CD4-positive, alpha-beta memory T cell (primary cell): ENCODE measurements at regions of chr12 and their contacts with region 1.

Region 1: GRCh38 chr12:93419388-93420034 is 22.2 kb downstream of the UBE2N start:
- DNase-seq: peak in 4 of 5 donors; percentile 41 to 55 (median 48)
- H3K4me3 ChIP-seq: no peak overlapping the region
- H3K4me3 Mint-ChIP-seq: peak overlapping the region in 3 of 8 donors; percentile 8 to 21 (median 19)
- H3K27ac ChIP-seq: no peak overlapping the region
- H3K27ac Mint-ChIP-seq: peak overlapping the region; percentile 39 to 89 (median 76)
- H3K4me1 ChIP-seq: peaks cover 80% of the 10 kb centered on the region
- H3K4me1 Mint-ChIP-seq: peaks cover 62 to 93% (median 80%) of the 10 kb centered on the region in 4 donors
- H3K27me3 ChIP-seq: no peaks in the 10 kb centered on the region
- H3K27me3 Mint-ChIP-seq: no peaks in the 10 kb centered on the region

Region 2: DNA sequence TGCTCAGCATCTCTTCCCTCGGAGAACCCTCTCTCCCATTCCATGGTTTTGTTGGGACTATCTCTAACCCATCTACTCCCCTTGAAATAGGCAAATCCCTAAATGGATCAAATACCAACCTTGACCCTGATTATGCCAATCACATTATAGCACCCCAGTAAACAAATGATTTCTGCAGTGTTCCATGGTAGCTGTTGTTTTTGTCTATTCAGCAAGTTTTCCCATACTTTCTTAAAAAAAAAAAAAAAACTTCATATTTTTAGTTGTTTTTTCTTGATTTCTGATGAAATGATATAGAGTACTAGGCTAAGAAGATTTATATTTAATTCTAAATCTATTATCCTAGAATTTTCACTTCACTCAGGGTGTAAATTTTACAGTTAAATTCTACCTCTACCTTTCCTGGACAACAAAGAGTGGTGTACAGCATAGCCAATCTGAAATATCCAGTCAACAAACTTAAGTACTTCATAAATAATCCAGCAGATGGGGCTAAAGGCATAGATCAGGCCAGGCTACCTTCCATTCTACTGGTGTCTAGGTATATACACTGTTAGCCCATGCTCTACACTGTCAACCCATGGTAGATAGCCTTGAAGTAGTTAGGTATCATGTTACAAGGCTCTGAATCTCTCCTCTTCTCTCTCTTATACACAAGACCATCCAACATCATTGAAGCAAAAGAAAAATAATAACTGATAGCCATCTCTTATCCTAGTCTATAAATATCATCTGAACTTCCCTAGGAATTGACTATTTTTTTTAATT is 634.5 kb before region 1 on chr12:
- CTCF ChIA-PET with region 1: interaction called, 32 read pairs
- POLR2A ChIA-PET with region 1: no interaction called
- intact Hi-C with region 1: loop called (anchors 1 kb)
- DNase-seq: peak; percentile 54 to 73 (median 67)
- H3K4me3 ChIP-seq: no peak overlapping the region
- H3K4me3 Mint-ChIP-seq: no peak overlapping the region
- H3K27ac ChIP-seq: no peak overlapping the region
- H3K27ac Mint-ChIP-seq: peak overlapping the region in 1 of 7 donors; percentile 4
- H3K4me1 ChIP-seq: no peaks in the 10 kb centered on the region
- H3K4me1 Mint-ChIP-seq: peaks cover 0 to 4% (median 2%) of the 10 kb centered on the region in 4 donors
- H3K27me3 ChIP-seq: no peaks in the 10 kb centered on the region
- H3K27me3 Mint-ChIP-seq: no peaks in the 10 kb centered on the region

Region 3: GRCh38 chr12:93098077-93098476 is 321.4 kb before region 1 on chr12:
- CTCF ChIA-PET with region 1: interaction called, 47 read pairs
- POLR2A ChIA-PET with region 1: no interaction called
- intact Hi-C with region 1: loop called (anchors 1 kb)
- DNase-seq: peak; percentile 50 to 66 (median 54)
- H3K4me3 ChIP-seq: no peak overlapping the region
- H3K4me3 Mint-ChIP-seq: peak overlapping the region in 2 of 8 donors; percentile 12 to 46
- H3K27ac ChIP-seq: no peak overlapping the region
- H3K27ac Mint-ChIP-seq: peak overlapping the region in 1 of 7 donors; percentile 2
- H3K4me1 ChIP-seq: no peaks in the 10 kb centered on the region
- H3K4me1 Mint-ChIP-seq: peaks cover 6 to 10% (median 6%) of the 10 kb centered on the region in 4 donors
- H3K27me3 ChIP-seq: no peaks in the 10 kb centered on the region
- H3K27me3 Mint-ChIP-seq: no peaks in the 10 kb centered on the region

Region 4: DNA sequence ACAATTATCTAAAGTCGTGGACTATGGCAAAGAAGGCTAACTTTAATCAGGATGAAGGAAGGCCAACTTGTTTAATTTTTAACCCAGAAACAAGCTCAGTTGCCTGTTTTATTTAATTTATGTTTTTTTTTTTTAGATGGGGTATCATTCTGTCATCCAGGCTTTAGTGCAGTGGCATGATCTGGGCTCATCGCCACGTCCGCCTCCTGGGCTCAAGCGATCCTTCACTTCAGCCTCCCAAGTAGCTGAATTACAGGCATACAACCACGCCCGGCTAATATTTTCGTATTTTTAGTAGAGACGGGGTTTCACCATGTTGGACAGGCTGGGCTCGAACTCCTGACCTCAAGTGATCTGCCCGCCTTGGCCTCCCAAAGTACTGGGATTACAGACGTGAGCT is 22.1 kb before region 1 on chr12:
- CTCF ChIA-PET with region 1: interaction called, 33 read pairs
- POLR2A ChIA-PET with region 1: interaction called, 3 read pairs
- intact Hi-C with region 1: no loop called
- DNase-seq: no peak
- H3K4me3 ChIP-seq: no peak overlapping the region
- H3K4me3 Mint-ChIP-seq: no peak overlapping the region
- H3K27ac ChIP-seq: no peak overlapping the region
- H3K27ac Mint-ChIP-seq: no peak overlapping the region
- H3K4me1 ChIP-seq: no peaks in the 10 kb centered on the region
- H3K4me1 Mint-ChIP-seq: peaks cover 0 to 7% (median 0%) of the 10 kb centered on the region in 4 donors
- H3K27me3 ChIP-seq: no peaks in the 10 kb centered on the region
- H3K27me3 Mint-ChIP-seq: no peaks in the 10 kb centered on the region

Region 5: GRCh38 chr12:93441617-93442410 is 22.3 kb after region 1 on chr12 and contains the start of gene UBE2N:
- CTCF ChIA-PET with region 1: interaction called, 75 read pairs
- POLR2A ChIA-PET with region 1: interaction called, 10 read pairs
- intact Hi-C with region 1: loop called (anchors 2 kb)
- DNase-seq: peak; percentile 95 to 97 (median 97)
- H3K4me3 ChIP-seq: peak within 1 kb of the TSS; percentile 90 to 98
- H3K4me3 Mint-ChIP-seq: peak within 1 kb of the TSS; percentile 94 to 98 (median 97)
- H3K27ac ChIP-seq: peak within 1 kb of the TSS; percentile 95
- H3K27ac Mint-ChIP-seq: peak within 1 kb of the TSS; percentile 94 to 100 (median 99)
- H3K4me1 ChIP-seq: peaks cover 48% of the 10 kb centered on the region
- H3K4me1 Mint-ChIP-seq: peaks cover 36 to 51% (median 45%) of the 10 kb centered on the region in 4 donors
- H3K27me3 ChIP-seq: no peaks in the 10 kb centered on the region
- H3K27me3 Mint-ChIP-seq: no peaks in the 10 kb centered on the region
- total RNA-seq, gene UBE2N: 71.2 to 72.8 TPM

Region 6: GRCh38 chr12:94401326-94401725 is 981.8 kb after region 1 on chr12:
- CTCF ChIA-PET with region 1: no interaction called
- POLR2A ChIA-PET with region 1: no interaction called
- intact Hi-C with region 1: no loop called
- DNase-seq: no peak
- H3K4me3 ChIP-seq: no peak overlapping the region
- H3K4me3 Mint-ChIP-seq: no peak overlapping the region
- H3K27ac ChIP-seq: no peak overlapping the region
- H3K27ac Mint-ChIP-seq: no peak overlapping the region
- H3K4me1 ChIP-seq: peaks cover 5% of the 10 kb centered on the region
- H3K4me1 Mint-ChIP-seq: peaks cover 8 to 9% (median 8%) of the 10 kb centered on the region in 4 donors
- H3K27me3 ChIP-seq: no peaks in the 10 kb centered on the region
- H3K27me3 Mint-ChIP-seq: no peaks in the 10 kb centered on the region